GM12878 (cell line): ENCODE measurements at regions of chr2 and their contacts with region 1.

Region 1: DNA sequence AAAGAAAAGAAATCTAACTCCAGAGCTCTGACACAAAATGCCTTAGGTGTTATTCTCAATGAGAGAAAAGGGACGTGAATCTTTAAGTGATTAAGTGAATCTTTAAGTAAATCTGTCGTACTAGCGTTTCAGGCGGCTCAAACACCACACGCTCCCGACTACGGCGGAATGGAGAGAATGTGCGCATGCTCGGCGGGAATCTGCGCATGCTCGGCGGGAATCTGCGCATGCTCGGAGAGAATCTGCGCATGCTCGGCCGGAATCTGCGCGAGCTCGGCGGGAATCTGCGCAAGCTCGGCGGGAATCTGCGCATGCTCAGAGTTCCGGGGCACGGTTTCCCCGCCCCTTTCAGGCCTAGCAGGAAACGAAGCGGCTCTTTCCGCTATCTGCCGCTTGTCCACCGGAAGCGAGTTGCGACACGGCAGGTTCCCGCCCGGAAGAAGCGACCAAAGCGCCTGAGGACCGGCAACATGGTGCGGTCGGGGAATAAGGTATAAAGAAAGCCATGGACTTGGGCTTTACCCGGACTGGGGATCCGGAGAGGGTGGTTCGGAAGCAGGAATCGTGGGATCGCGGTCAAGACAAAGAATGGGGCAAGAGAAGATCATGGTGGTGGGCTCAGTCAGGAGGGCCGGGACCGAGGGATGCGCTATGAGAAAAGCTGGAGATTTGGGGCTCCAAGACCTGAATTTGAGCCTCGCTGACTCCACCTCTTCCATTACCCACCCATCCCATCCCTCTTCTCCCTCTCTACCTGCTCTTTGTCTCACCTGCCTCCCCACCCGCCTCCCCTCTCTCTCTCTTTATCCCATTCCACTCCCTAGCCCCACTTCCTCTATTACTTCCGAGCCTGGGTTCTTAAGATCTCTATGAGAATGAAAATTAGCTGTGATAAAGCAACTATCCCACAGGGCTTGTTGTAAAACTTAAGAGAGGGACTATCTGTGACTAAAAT is at the start of gene XRCC5:
- DNase-seq: peak; percentile 96
- ATAC-seq: peak; percentile 57
- H3K4me3 ChIP-seq: peak within 1 kb of the TSS; percentile 94
- H3K27ac ChIP-seq: peak within 1 kb of the TSS; percentile 99
- H3K4me1 ChIP-seq: peaks cover 26% of the 10 kb centered on the region
- H3K27me3 ChIP-seq: no peaks in the 10 kb centered on the region
- CTCF ChIP-seq: no peak
- EP300 ChIP-seq: no peak
- POLR2A ChIP-seq: peak; percentile 94
- RAD21 ChIP-seq: no peak
- polyA plus RNA-seq, gene XRCC5: 552 to 556 TPM

Region 2: DNA sequence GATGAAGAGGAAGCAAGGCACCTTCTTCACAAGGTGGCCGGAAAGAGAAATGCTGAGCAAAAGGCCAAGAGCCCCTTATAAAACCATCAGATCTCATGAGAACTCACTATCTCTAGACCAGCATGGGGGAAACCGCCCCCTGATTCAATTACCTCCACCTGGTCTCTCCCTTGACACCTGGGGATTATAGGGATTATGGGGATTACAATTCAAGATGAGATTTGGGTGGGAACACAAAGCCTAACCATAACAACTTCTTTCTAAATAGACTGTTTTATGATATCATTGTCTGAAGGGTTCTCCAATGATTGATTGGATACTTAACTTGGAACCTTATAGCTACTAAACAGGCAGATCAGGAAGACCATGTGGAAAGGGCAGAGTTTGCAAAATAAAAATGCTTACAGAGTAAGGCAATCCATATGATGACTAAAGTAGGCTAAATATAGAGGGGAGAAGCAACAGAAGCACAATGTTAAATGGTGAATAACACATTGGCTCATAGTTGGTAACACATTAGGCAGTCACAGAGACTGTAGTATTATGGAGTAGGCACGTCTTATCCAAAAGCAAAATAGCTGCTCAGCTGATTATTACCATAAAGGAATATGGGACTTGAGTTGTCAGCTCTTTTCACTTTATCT is 1478.7 kb before region 1 on chr2:
- CTCF ChIA-PET with region 1: no interaction called
- POLR2A ChIA-PET with region 1: no interaction called
- RAD21 ChIA-PET with region 1: no interaction called
- SMC1A ChIA-PET with region 1: no interaction called
- in situ Hi-C with region 1: no loop called
- intact Hi-C with region 1: no loop called
- DNase-seq: no peak
- ATAC-seq: no peak
- H3K4me3 ChIP-seq: no peak overlapping the region
- H3K27ac ChIP-seq: no peak overlapping the region
- H3K4me1 ChIP-seq: no peaks in the 10 kb centered on the region
- H3K27me3 ChIP-seq: no peaks in the 10 kb centered on the region
- CTCF ChIP-seq: no peak
- EP300 ChIP-seq: no peak
- POLR2A ChIP-seq: no peak
- RAD21 ChIP-seq: no peak

Region 3: GRCh38 chr2:216013080-216013909 is 95.9 kb before region 1 on chr2 and contains the start of gene MREG:
- CTCF ChIA-PET with region 1: interaction called, 18 read pairs
- POLR2A ChIA-PET with region 1: no interaction called
- RAD21 ChIA-PET with region 1: interaction called, 5 read pairs
- SMC1A ChIA-PET with region 1: interaction called, 7 read pairs
- in situ Hi-C with region 1: no loop called
- intact Hi-C with region 1: loop called (anchors 1 kb)
- DNase-seq: no peak
- ATAC-seq: peak; percentile 45
- H3K4me3 ChIP-seq: peak within 1 kb of the TSS; percentile 94
- H3K27ac ChIP-seq: peak within 1 kb of the TSS; percentile 93
- H3K4me1 ChIP-seq: peaks cover 31% of the 10 kb centered on the region
- H3K27me3 ChIP-seq: no peaks in the 10 kb centered on the region
- CTCF ChIP-seq: peak; percentile 74 to 88 (median 78)
- EP300 ChIP-seq: no peak
- POLR2A ChIP-seq: peak; percentile 86
- RAD21 ChIP-seq: peak; percentile 54
- polyA plus RNA-seq, gene MREG: 16.8 to 21.3 TPM

Region 4: DNA sequence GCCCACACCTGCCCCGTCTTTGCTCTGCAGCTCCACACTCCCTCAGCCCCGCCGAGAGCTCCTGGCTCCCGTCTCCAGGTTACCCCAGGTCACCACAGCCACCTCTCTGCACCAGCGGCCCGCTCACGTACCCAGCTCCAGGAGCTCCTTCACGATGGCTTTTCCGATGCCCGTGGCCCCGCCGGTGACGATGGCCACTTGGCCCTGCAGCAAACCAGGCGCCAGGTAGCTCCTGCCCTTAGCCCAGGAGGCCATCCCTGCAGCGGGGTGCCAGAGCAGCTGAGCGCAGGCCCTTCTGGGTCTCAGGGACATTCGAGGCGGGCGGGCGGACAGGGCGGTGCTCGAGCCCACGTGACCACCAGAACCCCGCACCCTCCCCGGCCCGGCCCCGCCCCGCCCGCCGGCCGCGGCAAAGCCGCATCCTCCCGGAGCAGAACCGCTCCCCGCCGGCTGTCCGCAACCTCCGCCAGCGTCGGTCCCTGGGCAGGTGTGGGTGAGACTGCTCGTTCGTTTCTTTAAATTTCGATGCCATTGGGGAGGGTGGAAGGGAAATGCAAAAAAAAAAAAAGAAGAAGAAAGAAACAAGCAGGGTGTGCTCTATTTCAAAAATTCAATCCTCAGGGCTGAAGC is 27.6 kb before region 1 on chr2 and contains the starts of genes PECR and TMEM169:
- CTCF ChIA-PET with region 1: interaction called, 17 read pairs
- POLR2A ChIA-PET with region 1: interaction called, 42 read pairs
- RAD21 ChIA-PET with region 1: interaction called, 17 read pairs
- SMC1A ChIA-PET with region 1: interaction called, 34 read pairs
- in situ Hi-C with region 1: no loop called
- intact Hi-C with region 1: no loop called
- DNase-seq: no peak
- ATAC-seq: peak; percentile 97
- H3K4me3 ChIP-seq: peak within 1 kb of the TSS; percentile 84
- H3K27ac ChIP-seq: peak within 1 kb of the TSS; percentile 58
- H3K4me1 ChIP-seq: peaks cover 6% of the 10 kb centered on the region; the same call in 1 of the 2 replicates
- H3K27me3 ChIP-seq: no peaks in the 10 kb centered on the region
- CTCF ChIP-seq: no peak
- EP300 ChIP-seq: no peak
- POLR2A ChIP-seq: peak; percentile 94
- RAD21 ChIP-seq: no peak
- polyA plus RNA-seq, gene PECR: 7.6 to 10.4 TPM
- polyA plus RNA-seq, gene TMEM169: 0.57 to 1.2 TPM

Region 5: GRCh38 chr2:216130346-216130971 is 21.2 kb after region 1 on chr2:
- CTCF ChIA-PET with region 1: interaction called, 29 read pairs
- POLR2A ChIA-PET with region 1: interaction called, 4 read pairs
- RAD21 ChIA-PET with region 1: interaction called, 3 read pairs
- SMC1A ChIA-PET with region 1: interaction called, 3 read pairs
- in situ Hi-C with region 1: no loop called
- intact Hi-C with region 1: no loop called
- DNase-seq: no peak
- ATAC-seq: no peak
- H3K4me3 ChIP-seq: no peak overlapping the region
- H3K27ac ChIP-seq: no peak overlapping the region
- H3K4me1 ChIP-seq: no peaks in the 10 kb centered on the region
- H3K27me3 ChIP-seq: no peaks in the 10 kb centered on the region
- CTCF ChIP-seq: no peak
- EP300 ChIP-seq: no peak
- POLR2A ChIP-seq: no peak
- RAD21 ChIP-seq: no peak

Region 6: GRCh38 chr2:216328347-216328746 is 219.1 kb after region 1 on chr2:
- CTCF ChIA-PET with region 1: no interaction called
- POLR2A ChIA-PET with region 1: no interaction called
- RAD21 ChIA-PET with region 1: no interaction called
- SMC1A ChIA-PET with region 1: no interaction called
- in situ Hi-C with region 1: no loop called
- intact Hi-C with region 1: no loop called
- DNase-seq: no peak
- ATAC-seq: no peak
- H3K4me3 ChIP-seq: no peak overlapping the region
- H3K27ac ChIP-seq: no peak overlapping the region
- H3K4me1 ChIP-seq: no peaks in the 10 kb centered on the region
- H3K27me3 ChIP-seq: no peaks in the 10 kb centered on the region
- CTCF ChIP-seq: peak in 2 of 3 experiments; percentile 13; a peak in 1 of 6 replicates
- EP300 ChIP-seq: no peak
- POLR2A ChIP-seq: no peak
- RAD21 ChIP-seq: peak; percentile 25; the same call in 1 of the 2 replicates

Region 7: GRCh38 chr2:216404010-216404618 is 294.9 kb after region 1 on chr2:
- CTCF ChIA-PET with region 1: interaction called, 37 read pairs
- POLR2A ChIA-PET with region 1: no interaction called
- RAD21 ChIA-PET with region 1: interaction called, 7 read pairs
- SMC1A ChIA-PET with region 1: interaction called, 8 read pairs
- in situ Hi-C with region 1: no loop called
- intact Hi-C with region 1: no loop called
- DNase-seq: no peak
- ATAC-seq: peak; percentile 89
- H3K4me3 ChIP-seq: no peak overlapping the region
- H3K27ac ChIP-seq: no peak overlapping the region
- H3K4me1 ChIP-seq: no peaks in the 10 kb centered on the region
- H3K27me3 ChIP-seq: no peaks in the 10 kb centered on the region; a peak in 1 of 4 replicates
- CTCF ChIP-seq: peak; percentile 65 to 86 (median 77)
- EP300 ChIP-seq: no peak
- POLR2A ChIP-seq: no peak
- RAD21 ChIP-seq: peak; percentile 64